PC-9 (cell line): ENCODE measurements at regions of chr12 and their contacts with region 1.

Region 1: DNA sequence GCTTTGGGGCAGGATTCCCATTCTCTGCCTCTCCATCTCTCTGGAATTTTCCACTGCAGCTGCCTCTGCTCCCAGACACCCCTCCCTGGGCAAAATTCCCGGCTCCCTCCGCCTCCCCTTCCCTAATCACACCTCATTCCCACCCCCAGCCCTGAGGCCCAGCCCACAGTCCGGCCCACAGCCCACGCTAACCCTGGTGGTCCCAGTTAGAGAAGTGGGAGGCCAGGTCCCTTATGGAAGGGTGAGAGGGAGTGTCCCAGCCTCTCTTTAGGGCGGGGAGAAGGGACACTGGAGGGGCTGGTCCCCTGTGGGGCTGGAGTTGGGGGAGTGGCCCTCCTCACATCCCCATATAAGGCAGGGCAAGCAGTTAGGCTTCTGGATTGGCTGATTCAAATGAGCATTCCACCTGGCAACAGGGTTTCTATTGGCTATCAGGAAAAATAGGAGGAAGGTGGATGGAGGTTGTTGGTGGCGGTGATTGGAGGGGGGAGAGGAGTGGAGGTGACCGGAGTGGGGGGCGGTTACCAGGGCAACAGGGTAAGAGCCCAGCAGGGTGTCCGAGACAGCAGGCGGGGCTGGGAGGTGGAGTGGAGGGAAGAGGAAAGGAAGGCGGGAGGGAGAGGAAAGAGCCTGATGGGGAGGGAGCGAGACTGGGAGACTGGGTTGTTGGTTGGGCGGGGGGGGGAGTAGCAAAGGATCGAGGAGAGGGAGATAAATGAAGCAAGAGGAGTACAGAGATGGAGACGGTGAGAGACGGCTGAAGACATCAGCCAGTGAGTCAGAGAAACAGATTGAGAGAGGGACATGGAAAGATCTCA is 1.9 kb upstream of the PTMS start:
- DNase-seq: peak; percentile 97 to 98
- H3K4me3 ChIP-seq: peak overlapping the region; percentile 21; the same call in 1 of the 2 replicates
- H3K27ac ChIP-seq: no peak overlapping the region; the same call in 1 of the 2 replicates
- H3K4me1 ChIP-seq: peaks cover 36% of the 10 kb centered on the region
- H3K27me3 ChIP-seq: no peaks in the 10 kb centered on the region
- CTCF ChIP-seq: no peak

Region 2: GRCh38 chr12:6723607-6724396 is 40.4 kb before region 1 on chr12 and contains the start of gene COPS7A:
- CTCF ChIA-PET with region 1: no interaction called
- POLR2A ChIA-PET with region 1: interaction called, 12 read pairs
- intact Hi-C with region 1: no loop called
- DNase-seq: peak; percentile 98 to 100
- H3K4me3 ChIP-seq: peak within 1 kb of the TSS; percentile 77
- H3K27ac ChIP-seq: peak within 1 kb of the TSS; percentile 60
- H3K4me1 ChIP-seq: peaks cover 19% of the 10 kb centered on the region
- H3K27me3 ChIP-seq: no peaks in the 10 kb centered on the region
- CTCF ChIP-seq: no peak
- total RNA-seq, gene COPS7A: 88.7 and 116 TPM in 2 replicates

Region 3: DNA sequence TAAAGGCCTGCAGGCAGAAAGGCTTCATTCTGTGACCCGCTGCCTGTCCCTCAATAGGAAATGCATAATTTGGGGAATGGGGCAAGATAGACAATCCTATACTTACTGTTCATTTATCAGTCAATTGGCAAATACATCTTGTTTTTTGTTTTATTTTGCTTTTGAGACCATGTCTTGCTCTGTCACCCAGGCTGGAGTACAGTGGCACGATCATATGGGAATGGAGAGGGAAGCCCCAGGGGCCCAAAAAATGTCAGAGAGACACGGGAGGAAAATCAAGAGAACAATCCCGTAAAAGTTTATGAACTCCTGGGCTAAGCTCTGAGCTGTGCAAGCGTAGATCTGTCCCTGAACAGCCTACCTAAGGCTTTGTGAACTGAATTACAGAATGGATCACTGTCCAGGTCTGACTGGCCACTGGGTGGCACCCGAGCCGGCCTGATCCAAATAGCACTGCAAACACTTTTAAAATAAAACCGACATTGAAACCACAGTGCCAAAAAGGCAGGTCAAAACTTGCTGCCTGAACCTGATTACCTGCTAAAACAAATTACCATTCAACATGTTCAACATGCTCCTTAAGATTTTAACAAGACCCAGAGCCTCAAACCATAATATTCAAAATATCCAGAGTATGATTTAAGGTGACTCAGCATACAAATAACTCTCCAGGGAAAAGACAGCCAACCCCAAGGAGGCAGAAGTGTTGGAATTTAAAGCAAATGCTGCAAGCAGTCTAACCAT is 28.6 kb before region 1 on chr12:
- CTCF ChIA-PET with region 1: no interaction called
- POLR2A ChIA-PET with region 1: interaction called, 12 read pairs
- intact Hi-C with region 1: no loop called
- DNase-seq: peak; percentile 44 to 70
- H3K4me3 ChIP-seq: no peak overlapping the region
- H3K27ac ChIP-seq: no peak overlapping the region
- H3K4me1 ChIP-seq: no peaks in the 10 kb centered on the region; the same call in 1 of the 2 replicates
- H3K27me3 ChIP-seq: no peaks in the 10 kb centered on the region
- CTCF ChIP-seq: peak; percentile 84

Region 4: GRCh38 chr12:6807170-6807569 is 43.0 kb after region 1 on chr12:
- CTCF ChIA-PET with region 1: interaction called, 13 read pairs
- POLR2A ChIA-PET with region 1: interaction called, 14 read pairs
- intact Hi-C with region 1: no loop called
- DNase-seq: no peak
- H3K4me3 ChIP-seq: no peak overlapping the region
- H3K27ac ChIP-seq: no peak overlapping the region
- H3K4me1 ChIP-seq: no peaks in the 10 kb centered on the region
- H3K27me3 ChIP-seq: no peaks in the 10 kb centered on the region
- CTCF ChIP-seq: no peak

Region 5: DNA sequence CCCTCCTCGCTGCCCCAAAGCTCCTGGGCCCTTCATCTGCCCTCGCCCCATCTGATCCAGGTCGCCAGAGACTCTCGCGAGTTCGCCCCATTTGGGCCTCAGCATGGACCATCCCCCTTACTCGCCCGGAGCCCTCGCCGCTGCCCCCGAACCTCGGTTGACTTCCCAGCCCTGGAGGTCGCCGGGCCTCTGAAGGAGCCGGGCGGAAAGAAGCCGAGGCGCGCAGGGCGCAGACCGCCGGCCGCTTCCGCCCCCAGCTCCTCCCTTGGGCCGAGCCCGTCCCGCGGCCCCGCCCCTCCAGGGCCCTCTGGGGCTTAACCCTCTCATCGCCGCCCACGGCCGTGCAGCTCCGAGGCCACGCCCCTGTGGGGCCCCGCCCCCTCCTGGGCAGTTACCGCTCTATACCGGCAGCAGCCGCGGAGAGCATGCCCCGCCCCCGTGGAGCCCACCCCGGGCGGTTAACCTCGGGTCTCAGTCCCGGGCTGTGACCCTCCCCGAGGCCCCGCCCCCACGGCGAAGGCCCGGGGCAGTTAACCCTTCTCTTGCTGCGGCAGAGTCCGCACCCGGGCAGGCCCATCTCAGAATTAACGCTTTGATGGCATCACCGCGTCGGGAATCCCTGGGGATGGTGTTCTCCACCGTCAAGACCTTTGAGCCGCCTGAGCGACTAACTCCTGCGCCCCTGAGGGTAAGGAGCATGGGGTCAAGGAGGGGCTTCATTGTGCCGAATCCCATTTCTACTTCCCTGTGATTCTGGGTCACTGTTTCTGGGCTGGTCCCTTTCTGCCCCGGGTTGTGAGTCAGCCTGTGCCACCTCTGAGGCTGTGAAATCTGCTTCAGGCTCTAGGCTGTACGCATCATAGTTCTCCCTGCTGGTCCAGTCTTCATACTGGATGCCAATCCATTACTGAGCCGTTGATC is 109.1 kb after region 1 on chr12 and contains the start of gene SPSB2:
- CTCF ChIA-PET with region 1: no interaction called
- POLR2A ChIA-PET with region 1: no interaction called
- intact Hi-C with region 1: no loop called
- DNase-seq: peak; percentile 91 to 100
- H3K4me3 ChIP-seq: peak within 1 kb of the TSS; percentile 84
- H3K27ac ChIP-seq: peak within 1 kb of the TSS; percentile 37
- H3K4me1 ChIP-seq: peaks cover 36% of the 10 kb centered on the region
- H3K27me3 ChIP-seq: no peaks in the 10 kb centered on the region
- CTCF ChIP-seq: no peak
- total RNA-seq, gene SPSB2: 28.9 and 30.1 TPM in 2 replicates

Region 6: GRCh38 chr12:6904280-6905278 is 140.4 kb after region 1 on chr12 and contains the start of gene LRRC23:
- CTCF ChIA-PET with region 1: no interaction called
- POLR2A ChIA-PET with region 1: interaction called, 16 read pairs
- intact Hi-C with region 1: no loop called
- DNase-seq: peak; percentile 93 to 98
- H3K4me3 ChIP-seq: peak within 1 kb of the TSS; percentile 86
- H3K27ac ChIP-seq: 0 out of 2 replicates have a peak within 1 kb of the TSS, but pooled peaks have one; percentile 1
- H3K4me1 ChIP-seq: peaks cover 22% of the 10 kb centered on the region
- H3K27me3 ChIP-seq: no peaks in the 10 kb centered on the region
- CTCF ChIP-seq: no peak
- total RNA-seq, gene LRRC23: 29.3 and 38.8 TPM in 2 replicates

Region 7: GRCh38 chr12:7129872-7130680 is 365.9 kb after region 1 on chr12 and contains the start of gene CLSTN3:
- CTCF ChIA-PET with region 1: no interaction called
- POLR2A ChIA-PET with region 1: interaction called, 10 read pairs
- intact Hi-C with region 1: no loop called
- DNase-seq: peak; percentile 54 to 87
- H3K4me3 ChIP-seq: peak within 1 kb of the TSS; percentile 66
- H3K27ac ChIP-seq: no peak within 1 kb of the TSS
- H3K4me1 ChIP-seq: peaks cover 19% of the 10 kb centered on the region
- H3K27me3 ChIP-seq: no peaks in the 10 kb centered on the region
- CTCF ChIP-seq: no peak
- total RNA-seq, gene CLSTN3: 111 and 153 TPM in 2 replicates